ENCODE measurements at regions of chr11 and their contacts with region 1.

Region 1: GRCh38 chr11:44133335-44133946 is 38.0 kb downstream of the EXT2 start:
- ATAC-seq: peak in 4 of 8 experiments; percentile 41 to 62 (median 57)
- H3K4me3 ChIP-seq: no peak overlapping the region
- H3K27ac ChIP-seq: no peak overlapping the region
- H3K4me1 ChIP-seq: no peaks in the 10 kb centered on the region

Region 2: GRCh38 chr11:44256673-44257291 is 123.3 kb after region 1 on chr11:
- in situ Hi-C with region 1: no loop called
- ATAC-seq: no peak
- H3K4me3 ChIP-seq: no peak overlapping the region
- H3K27ac ChIP-seq: no peak overlapping the region
- H3K4me1 ChIP-seq: no peaks in the 10 kb centered on the region

Region 3: GRCh38 chr11:44286268-44286880 is 152.9 kb after region 1 on chr11:
- in situ Hi-C with region 1: loop called in 1 of 9 experiments (anchors 10 kb)
- ATAC-seq: peak in 7 of 8 experiments; percentile 25 to 63 (median 47)
- H3K4me3 ChIP-seq: no peak overlapping the region
- H3K27ac ChIP-seq: no peak overlapping the region
- H3K4me1 ChIP-seq: peaks cover 0 to 6% of the 10 kb centered on the region in 2 donors

Region 4: DNA sequence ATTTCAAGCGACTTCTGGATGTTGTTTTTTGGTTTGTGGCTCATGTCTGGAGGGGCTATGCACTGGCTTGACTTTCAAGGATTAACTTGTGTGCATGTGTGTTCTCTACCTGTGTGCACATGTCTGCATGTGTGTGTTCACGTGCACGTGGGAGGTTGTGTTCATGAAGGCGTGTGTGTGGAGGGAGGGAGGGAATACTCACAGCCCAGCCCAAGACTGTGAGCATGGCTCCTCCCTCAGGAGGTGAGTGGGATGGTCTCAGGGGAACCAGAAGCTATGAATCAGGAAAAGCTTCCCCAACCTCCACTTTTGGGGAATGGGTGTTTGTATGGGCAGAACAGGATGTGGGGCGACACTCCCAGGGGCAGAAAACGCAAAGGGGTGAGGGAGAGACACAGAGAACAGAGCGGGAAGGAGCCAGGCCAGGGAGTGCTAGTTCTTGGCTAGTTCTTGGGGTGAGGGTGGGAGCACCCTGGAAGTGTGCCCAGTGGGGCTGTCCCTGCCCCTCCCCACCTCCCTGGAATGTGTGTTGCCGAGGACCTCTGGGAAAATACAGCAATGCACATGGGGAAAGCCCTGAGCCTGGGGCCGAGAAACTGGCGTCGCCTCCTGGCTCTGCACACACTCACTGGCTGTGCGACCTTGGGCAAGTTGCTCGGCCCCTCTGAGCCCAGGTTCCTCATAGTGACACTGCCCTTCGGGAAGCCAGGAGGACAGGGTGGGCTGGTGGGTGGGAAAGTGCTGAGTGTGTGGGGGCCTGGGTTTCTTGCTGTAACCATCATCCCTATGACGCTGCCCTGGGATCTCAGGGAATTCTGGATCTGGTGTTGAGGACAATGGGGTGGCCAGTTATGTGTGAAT is 193.4 kb after region 1 on chr11:
- in situ Hi-C with region 1: loop called in 1 of 9 experiments (anchors 10 kb)
- ATAC-seq: peak in 4 of 8 experiments; percentile 44 to 82 (median 65)
- H3K4me3 ChIP-seq: no peak overlapping the region
- H3K27ac ChIP-seq: no peak overlapping the region
- H3K4me1 ChIP-seq: peaks cover 3 to 25% of the 10 kb centered on the region in 2 donors

Measured in motor neuron (in vitro differentiated cells).